ENCODE measurements at regions of chr1 and their contacts with region 1.

Region 1: DNA sequence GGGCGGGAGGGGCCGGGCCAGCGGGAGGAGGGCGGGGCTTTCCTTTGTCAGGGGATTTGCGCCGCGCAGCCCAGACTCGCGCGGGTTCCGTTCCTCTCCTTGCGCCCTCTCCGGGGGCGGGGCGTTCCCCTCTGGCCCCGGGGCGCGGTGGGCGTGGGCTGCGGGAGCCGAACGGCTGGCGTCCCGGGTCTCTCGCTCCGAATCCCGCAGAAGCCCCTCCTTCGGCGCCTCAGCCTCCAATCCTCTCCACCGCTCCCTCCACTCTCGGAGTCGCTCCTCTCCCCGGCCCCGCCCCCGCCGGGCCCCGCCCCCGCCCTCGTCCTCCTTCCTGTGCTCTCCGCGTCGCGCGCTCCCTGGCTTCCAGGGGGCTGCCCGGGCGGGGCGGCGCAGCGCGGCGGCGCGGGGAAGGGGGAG is 82.8 kb upstream of the BMP8A start:
- DNase-seq: peak; percentile 93
- H3K4me3 Mint-ChIP-seq: peak overlapping the region; percentile 83
- H3K27ac Mint-ChIP-seq: peak overlapping the region; percentile 71
- H3K4me1 Mint-ChIP-seq: peaks cover 55% of the 10 kb centered on the region
- H3K27me3 Mint-ChIP-seq: no peaks in the 10 kb centered on the region
- CTCF ChIP-seq: no peak

Region 2: DNA sequence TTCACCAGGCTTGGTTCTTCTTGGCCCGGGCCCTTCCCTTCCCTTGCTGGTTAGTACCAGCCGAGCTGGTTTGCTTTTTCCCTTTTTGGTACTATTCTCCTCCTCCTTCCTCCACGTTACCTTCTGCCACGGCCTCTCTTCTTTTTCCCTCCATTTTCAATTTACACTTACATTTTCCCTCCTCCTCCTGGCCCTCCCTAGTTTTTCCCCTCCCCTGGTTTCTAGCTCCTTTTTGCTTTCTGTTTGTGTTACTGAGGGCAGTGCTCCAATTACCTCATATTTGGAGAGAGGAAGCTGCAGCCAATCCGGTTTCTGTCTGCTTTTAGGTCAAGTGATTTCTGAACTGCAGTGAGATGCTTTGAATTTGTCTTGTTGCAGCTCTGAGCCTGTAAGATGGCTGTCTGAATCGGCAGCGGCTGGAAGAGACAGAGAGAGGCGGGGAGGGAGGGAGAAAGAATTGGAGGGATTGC is 140.5 kb before region 1 on chr1:
- CTCF ChIA-PET with region 1: interaction called, 6 read pairs
- POLR2A ChIA-PET with region 1: interaction called, 4 read pairs
- intact Hi-C with region 1: loop called (anchors 5 kb)
- DNase-seq: peak; percentile 65
- H3K4me3 Mint-ChIP-seq: peak overlapping the region; percentile 68
- H3K27ac Mint-ChIP-seq: peak overlapping the region; percentile 90
- H3K4me1 Mint-ChIP-seq: peaks cover 46% of the 10 kb centered on the region
- H3K27me3 Mint-ChIP-seq: no peaks in the 10 kb centered on the region
- CTCF ChIP-seq: no peak

Region 3: GRCh38 chr1:39391691-39392679 is 16.7 kb before region 1 on chr1:
- CTCF ChIA-PET with region 1: interaction called, 25 read pairs
- POLR2A ChIA-PET with region 1: interaction called, 98 read pairs
- intact Hi-C with region 1: loop called (anchors 2 kb)
- DNase-seq: peak; percentile 82
- H3K4me3 Mint-ChIP-seq: peak overlapping the region; percentile 36
- H3K27ac Mint-ChIP-seq: peak overlapping the region; percentile 90
- H3K4me1 Mint-ChIP-seq: peaks cover 58% of the 10 kb centered on the region
- H3K27me3 Mint-ChIP-seq: no peaks in the 10 kb centered on the region
- CTCF ChIP-seq: no peak

Region 4: DNA sequence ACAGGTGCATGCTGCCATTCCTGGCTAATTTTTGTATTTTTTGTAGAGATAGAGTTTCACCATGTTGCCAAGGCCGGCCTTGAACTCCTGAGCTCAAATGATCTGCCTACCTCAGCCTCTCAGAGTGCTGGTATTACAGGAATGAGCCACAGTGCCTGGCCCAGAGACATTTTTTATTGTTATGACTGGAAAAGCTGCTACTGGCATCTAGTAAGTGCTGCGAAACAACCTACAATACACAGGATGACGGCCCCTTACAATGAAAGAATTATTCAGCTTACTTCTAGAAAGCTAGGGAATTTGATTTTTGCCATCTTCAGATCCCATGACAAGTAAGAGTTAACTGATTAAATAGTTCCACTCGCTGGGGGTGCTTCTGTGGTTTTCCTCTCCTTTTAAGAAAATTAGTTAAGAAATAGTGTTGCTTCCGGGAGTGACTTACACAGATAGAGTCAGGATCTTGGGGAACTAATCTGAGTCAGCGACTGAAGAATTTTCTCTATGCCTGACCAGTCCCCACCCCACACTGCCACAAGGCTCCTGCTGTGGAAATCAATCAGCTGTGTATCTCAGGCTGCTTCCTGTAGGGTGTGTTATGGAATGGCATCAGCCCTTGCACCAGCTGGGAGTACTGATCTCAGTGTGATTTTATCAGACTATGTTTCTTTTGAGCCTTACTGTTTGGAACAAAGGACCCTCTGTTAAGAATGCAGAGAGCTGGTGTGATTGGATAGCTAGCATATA is 10.2 kb before region 1 on chr1:
- CTCF ChIA-PET with region 1: interaction called, 23 read pairs
- POLR2A ChIA-PET with region 1: interaction called, 98 read pairs
- intact Hi-C with region 1: loop called (anchors 2 kb)
- DNase-seq: peak; percentile 92
- H3K4me3 Mint-ChIP-seq: peak overlapping the region; percentile 47
- H3K27ac Mint-ChIP-seq: peak overlapping the region; percentile 83
- H3K4me1 Mint-ChIP-seq: peaks cover 46% of the 10 kb centered on the region
- H3K27me3 Mint-ChIP-seq: no peaks in the 10 kb centered on the region
- CTCF ChIP-seq: no peak